Endothelial cell of umbilical vein (primary cell): ENCODE measurements at regions of chr12 and their contacts with region 1.

Region 1: GRCh38 chr12:68610370-68611093 is at the start of gene RAP1B:
- DNase-seq: peak; percentile 87
- H3K4me3 ChIP-seq: peak within 1 kb of the TSS; percentile 90 to 97 (median 96)
- H3K27ac ChIP-seq: peak within 1 kb of the TSS; percentile 90
- H3K4me1 ChIP-seq: peaks cover 35% of the 10 kb centered on the region
- H3K27me3 ChIP-seq: no peaks in the 10 kb centered on the region
- CTCF ChIP-seq: no peak
- POLR2A ChIP-seq: peak; percentile 95
- total RNA-seq, gene RAP1B: 174 and 186 TPM in 2 replicates

Region 2: GRCh38 chr12:68223083-68223747 is 387.3 kb before region 1 on chr12:
- CTCF ChIA-PET with region 1: no interaction called
- POLR2A ChIA-PET with region 1: no interaction called
- dilution Hi-C with region 1: no loop called
- intact Hi-C with region 1: loop called (anchors 10 kb)
- DNase-seq: peak; percentile 88
- H3K4me3 ChIP-seq: no peak overlapping the region
- H3K27ac ChIP-seq: no peak overlapping the region
- H3K4me1 ChIP-seq: peaks cover 6% of the 10 kb centered on the region
- H3K27me3 ChIP-seq: peaks cover 0 to 2% of the 10 kb centered on the region in 2 experiments
- CTCF ChIP-seq: peak; percentile 84 to 86
- POLR2A ChIP-seq: no peak

Region 3: DNA sequence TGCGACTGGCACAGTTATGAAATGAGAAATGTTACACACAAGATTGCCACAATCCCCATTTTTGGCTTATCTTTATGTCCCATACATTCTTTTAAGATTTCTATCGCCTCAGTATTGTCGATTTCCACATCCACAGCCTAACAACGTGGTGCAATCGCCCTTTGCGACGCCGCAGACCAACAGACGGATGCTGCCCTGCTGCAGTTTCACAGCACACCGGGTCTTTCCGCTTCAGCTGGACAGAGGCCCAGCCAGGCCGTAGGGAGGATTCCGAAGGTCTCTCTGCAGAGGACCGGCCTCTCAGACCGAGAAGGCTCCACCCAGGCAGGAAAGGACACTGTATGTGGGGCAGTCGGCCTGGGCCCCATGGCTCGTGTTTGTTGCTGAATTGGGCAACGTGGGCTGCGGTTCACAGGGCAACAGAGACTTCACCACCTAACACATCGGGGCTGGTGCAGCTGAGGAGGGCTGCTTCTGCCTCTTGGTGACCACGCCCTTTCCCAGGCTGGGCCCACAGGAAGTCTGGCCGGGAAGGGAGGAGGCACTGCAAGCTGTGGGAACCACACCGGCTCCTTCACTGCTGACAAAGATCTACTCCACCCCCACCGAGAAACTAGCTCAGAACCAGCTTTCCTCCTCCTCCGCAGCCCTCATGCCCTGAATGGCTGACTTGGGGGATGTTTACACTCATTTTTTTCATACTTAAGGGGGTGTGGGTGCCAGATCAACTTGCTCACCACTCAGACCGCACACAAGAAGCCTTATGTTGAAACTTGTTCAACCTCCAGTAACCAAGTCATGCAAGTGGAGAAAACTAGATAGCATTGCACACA is 245.4 kb before region 1 on chr12:
- CTCF ChIA-PET with region 1: interaction called, 21 read pairs
- POLR2A ChIA-PET with region 1: no interaction called
- dilution Hi-C with region 1: no loop called
- intact Hi-C with region 1: loop called (anchors 1 kb)
- DNase-seq: peak; percentile 90
- H3K4me3 ChIP-seq: peak overlapping the region; percentile 4 to 31 (median 29)
- H3K27ac ChIP-seq: peak overlapping the region; percentile 54
- H3K4me1 ChIP-seq: peaks cover 11% of the 10 kb centered on the region
- H3K27me3 ChIP-seq: peaks cover 2 to 3% of the 10 kb centered on the region in 2 experiments
- CTCF ChIP-seq: no peak
- POLR2A ChIP-seq: peak; percentile 52

Region 4: GRCh38 chr12:68521321-68521839 is 89.2 kb before region 1 on chr12:
- CTCF ChIA-PET with region 1: no interaction called
- POLR2A ChIA-PET with region 1: no interaction called
- dilution Hi-C with region 1: no loop called
- intact Hi-C with region 1: loop called (anchors 1 kb)
- DNase-seq: peak; percentile 92
- H3K4me3 ChIP-seq: peak overlapping the region in 2 of 3 experiments; percentile 9 to 51
- H3K27ac ChIP-seq: peak overlapping the region; percentile 95
- H3K4me1 ChIP-seq: peaks cover 17% of the 10 kb centered on the region
- H3K27me3 ChIP-seq: no peaks in the 10 kb centered on the region
- CTCF ChIP-seq: no peak
- POLR2A ChIP-seq: no peak

Region 5: GRCh38 chr12:68686595-68687521 is 76.3 kb after region 1 on chr12 and contains the start of gene NUP107:
- CTCF ChIA-PET with region 1: no interaction called
- POLR2A ChIA-PET with region 1: no interaction called
- dilution Hi-C with region 1: no loop called
- intact Hi-C with region 1: loop called (anchors 1 kb)
- DNase-seq: peak; percentile 100
- H3K4me3 ChIP-seq: peak within 1 kb of the TSS; percentile 44 to 84 (median 76)
- H3K27ac ChIP-seq: peak within 1 kb of the TSS; percentile 90
- H3K4me1 ChIP-seq: peaks cover 19% of the 10 kb centered on the region
- H3K27me3 ChIP-seq: no peaks in the 10 kb centered on the region
- CTCF ChIP-seq: peak in 1 of 2 donors; percentile 8
- POLR2A ChIP-seq: peak; percentile 97
- total RNA-seq, gene NUP107: 64.0 and 78.7 TPM in 2 replicates

Region 6: DNA sequence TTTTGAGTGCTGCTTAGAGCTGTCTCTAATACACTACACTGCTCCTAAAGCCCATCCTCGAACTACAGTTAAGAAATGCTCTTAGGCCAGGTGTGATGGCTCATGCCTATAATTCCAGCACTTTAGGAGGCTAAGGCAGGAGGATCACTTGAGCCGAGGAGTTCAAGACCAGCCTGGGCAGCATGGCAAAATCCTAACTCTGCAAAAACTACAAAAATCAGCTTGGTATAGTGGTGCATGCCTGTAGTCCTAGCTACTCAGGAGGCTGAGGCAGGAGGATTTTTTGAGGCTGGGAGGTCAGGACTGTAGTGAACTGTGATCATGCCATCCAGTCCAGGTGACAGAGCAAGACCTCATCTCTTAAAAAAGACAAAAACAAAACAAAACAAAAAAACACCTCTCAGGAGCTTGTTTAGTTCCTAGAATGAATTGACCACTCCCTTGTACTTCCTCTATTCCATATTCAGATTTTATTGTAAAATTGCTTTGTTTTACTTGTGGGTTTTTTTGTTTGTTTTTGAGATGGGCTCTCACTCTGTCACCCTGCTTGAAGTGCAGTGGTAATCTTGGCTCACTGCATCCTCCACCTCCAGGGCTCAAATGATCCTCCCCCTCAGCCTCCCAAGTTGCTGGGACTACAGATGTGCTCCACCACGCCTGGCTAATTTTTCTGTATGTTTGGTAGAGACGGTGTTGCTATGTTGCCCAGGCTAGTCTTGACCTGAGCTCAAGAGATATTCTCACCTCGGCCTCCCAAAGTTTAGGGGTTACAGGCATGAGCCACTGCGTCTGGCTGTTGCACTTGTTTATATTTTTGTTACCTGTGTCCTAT is 211.0 kb after region 1 on chr12:
- CTCF ChIA-PET with region 1: no interaction called
- POLR2A ChIA-PET with region 1: no interaction called
- dilution Hi-C with region 1: no loop called
- intact Hi-C with region 1: loop called (anchors 5 kb)
- DNase-seq: no peak
- H3K4me3 ChIP-seq: no peak overlapping the region
- H3K27ac ChIP-seq: no peak overlapping the region
- H3K4me1 ChIP-seq: peaks cover 8% of the 10 kb centered on the region
- H3K27me3 ChIP-seq: no peaks in the 10 kb centered on the region
- CTCF ChIP-seq: no peak
- POLR2A ChIP-seq: peak; percentile 31

Region 7: DNA sequence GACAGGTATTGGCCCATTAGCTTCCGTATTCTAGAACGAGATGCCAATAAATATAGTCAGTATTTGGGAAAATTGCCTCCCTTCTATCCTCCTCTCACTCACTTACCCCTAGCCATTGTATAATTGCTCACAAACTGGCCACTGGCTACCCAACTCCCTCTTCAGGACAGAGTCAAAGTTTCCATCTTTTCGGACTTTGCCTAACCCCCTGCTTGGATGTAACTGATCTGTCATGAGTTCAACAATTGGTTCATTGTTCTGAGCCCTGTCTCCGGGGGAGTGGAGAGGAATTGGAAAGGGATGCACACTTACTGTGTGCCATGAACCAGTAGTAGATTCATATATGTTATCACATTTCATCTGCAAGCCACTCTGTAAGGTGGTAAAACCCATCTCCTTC is 1226.7 kb after region 1 on chr12:
- CTCF ChIA-PET with region 1: no interaction called
- POLR2A ChIA-PET with region 1: no interaction called
- dilution Hi-C with region 1: no loop called
- intact Hi-C with region 1: no loop called
- DNase-seq: no peak
- H3K4me3 ChIP-seq: no peak overlapping the region
- H3K27ac ChIP-seq: no peak overlapping the region
- H3K4me1 ChIP-seq: no peaks in the 10 kb centered on the region
- H3K27me3 ChIP-seq: peaks cover 0 to 3% of the 10 kb centered on the region in 2 experiments
- CTCF ChIP-seq: no peak
- POLR2A ChIP-seq: no peak